ENCODE measurements at regions of chr6 and their contacts with region 1.

Region 1: GRCh38 chr6:53216301-53216700 is 67.7 kb upstream of the GCM1 start:
- DNase-seq: no peak
- ATAC-seq: no peak
- H3K4me3 ChIP-seq: no peak overlapping the region
- H3K27ac ChIP-seq: no peak overlapping the region
- H3K4me1 ChIP-seq: no peaks in the 10 kb centered on the region
- H3K27me3 ChIP-seq: no peaks in the 10 kb centered on the region
- CTCF ChIP-seq: no peak
- POLR2A ChIP-seq: no peak

Region 2: GRCh38 chr6:53103992-53104675 is 112.2 kb before region 1 on chr6:
- intact Hi-C with region 1: no loop called
- DNase-seq: no peak
- ATAC-seq: no peak
- H3K4me3 ChIP-seq: no peak overlapping the region
- H3K27ac ChIP-seq: no peak overlapping the region
- H3K4me1 ChIP-seq: no peaks in the 10 kb centered on the region
- H3K27me3 ChIP-seq: no peaks in the 10 kb centered on the region
- CTCF ChIP-seq: peak in 1 of 7 experiments; percentile 14
- POLR2A ChIP-seq: no peak

Region 3: DNA sequence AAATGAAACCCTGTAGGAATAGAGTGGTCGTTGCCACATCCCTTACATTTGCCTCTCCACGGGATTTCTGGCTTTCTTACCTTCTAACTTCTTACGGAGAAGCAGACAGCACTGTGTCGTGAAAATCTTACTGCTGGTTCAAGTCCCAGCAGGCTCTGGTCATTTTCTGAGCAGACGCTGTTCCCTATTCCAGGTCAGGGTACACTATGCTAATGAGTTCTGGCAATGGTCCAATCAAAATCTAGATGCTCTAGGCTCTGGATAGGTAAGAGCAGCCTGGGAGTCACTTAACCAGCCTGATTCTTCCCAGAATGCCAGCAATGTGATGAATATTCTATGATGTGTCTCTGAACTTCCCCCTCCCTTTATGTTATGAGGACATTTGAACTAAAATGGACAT is 67.6 kb before region 1 on chr6 and contains the start of gene GCM1:
- intact Hi-C with region 1: no loop called
- DNase-seq: no peak
- ATAC-seq: no peak
- H3K4me3 ChIP-seq: no peak within 1 kb of the TSS
- H3K27ac ChIP-seq: no peak within 1 kb of the TSS
- H3K4me1 ChIP-seq: no peaks in the 10 kb centered on the region
- H3K27me3 ChIP-seq: no peaks in the 10 kb centered on the region
- CTCF ChIP-seq: no peak
- POLR2A ChIP-seq: no peak
- total RNA-seq, gene GCM1: 0.26 TPM in 1 of 2 donors, not detected in the other

Region 4: DNA sequence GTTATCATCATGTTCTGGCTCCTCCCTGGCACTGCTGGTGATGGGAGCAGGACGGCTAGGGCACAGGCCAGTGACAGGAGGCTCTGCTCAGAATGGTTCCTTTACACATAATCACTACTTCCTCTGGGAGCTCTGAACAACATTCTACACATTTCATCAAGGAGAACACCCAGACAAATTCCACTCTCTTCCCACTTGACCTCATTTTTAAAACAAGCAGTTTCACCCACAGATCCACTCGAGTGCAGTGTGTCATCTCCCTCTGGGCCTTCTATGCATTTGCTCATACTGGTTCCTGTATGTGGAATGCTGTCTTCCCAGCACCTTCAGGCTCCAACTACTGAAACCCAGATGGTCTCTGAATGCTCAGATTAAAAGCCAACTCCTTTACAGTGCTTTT is 47.6 kb after region 1 on chr6:
- intact Hi-C with region 1: loop called (anchors 10 kb)
- DNase-seq: no peak
- ATAC-seq: no peak
- H3K4me3 ChIP-seq: no peak overlapping the region
- H3K27ac ChIP-seq: no peak overlapping the region
- H3K4me1 ChIP-seq: peaks cover 9% of the 10 kb centered on the region
- H3K27me3 ChIP-seq: no peaks in the 10 kb centered on the region
- CTCF ChIP-seq: no peak
- POLR2A ChIP-seq: no peak